ENCODE measurements at regions of chr15 and their contacts with region 1.

Region 1: GRCh38 chr15:40108855-40109735 is at the start of gene BMF:
- DNase-seq: peak; percentile 85
- H3K4me3 ChIP-seq: peak within 1 kb of the TSS; percentile 73
- H3K27me3 ChIP-seq: peaks cover 7% of the 10 kb centered on the region
- CTCF ChIP-seq: peak; percentile 45
- polyA plus RNA-seq, gene BMF: 5.8 and 8.3 TPM in 2 replicates

Region 2: GRCh38 chr15:40038638-40039543 is 70.2 kb before region 1 on chr15 and contains the start of gene SRP14:
- CTCF ChIA-PET with region 1: interaction called, 14 read pairs
- POLR2A ChIA-PET with region 1: no interaction called
- DNase-seq: peak; percentile 60
- H3K4me3 ChIP-seq: peak within 1 kb of the TSS; percentile 99
- H3K27me3 ChIP-seq: no peaks in the 10 kb centered on the region
- CTCF ChIP-seq: no peak
- polyA plus RNA-seq, gene SRP14: 305 and 564 TPM in 2 replicates

Region 3: DNA sequence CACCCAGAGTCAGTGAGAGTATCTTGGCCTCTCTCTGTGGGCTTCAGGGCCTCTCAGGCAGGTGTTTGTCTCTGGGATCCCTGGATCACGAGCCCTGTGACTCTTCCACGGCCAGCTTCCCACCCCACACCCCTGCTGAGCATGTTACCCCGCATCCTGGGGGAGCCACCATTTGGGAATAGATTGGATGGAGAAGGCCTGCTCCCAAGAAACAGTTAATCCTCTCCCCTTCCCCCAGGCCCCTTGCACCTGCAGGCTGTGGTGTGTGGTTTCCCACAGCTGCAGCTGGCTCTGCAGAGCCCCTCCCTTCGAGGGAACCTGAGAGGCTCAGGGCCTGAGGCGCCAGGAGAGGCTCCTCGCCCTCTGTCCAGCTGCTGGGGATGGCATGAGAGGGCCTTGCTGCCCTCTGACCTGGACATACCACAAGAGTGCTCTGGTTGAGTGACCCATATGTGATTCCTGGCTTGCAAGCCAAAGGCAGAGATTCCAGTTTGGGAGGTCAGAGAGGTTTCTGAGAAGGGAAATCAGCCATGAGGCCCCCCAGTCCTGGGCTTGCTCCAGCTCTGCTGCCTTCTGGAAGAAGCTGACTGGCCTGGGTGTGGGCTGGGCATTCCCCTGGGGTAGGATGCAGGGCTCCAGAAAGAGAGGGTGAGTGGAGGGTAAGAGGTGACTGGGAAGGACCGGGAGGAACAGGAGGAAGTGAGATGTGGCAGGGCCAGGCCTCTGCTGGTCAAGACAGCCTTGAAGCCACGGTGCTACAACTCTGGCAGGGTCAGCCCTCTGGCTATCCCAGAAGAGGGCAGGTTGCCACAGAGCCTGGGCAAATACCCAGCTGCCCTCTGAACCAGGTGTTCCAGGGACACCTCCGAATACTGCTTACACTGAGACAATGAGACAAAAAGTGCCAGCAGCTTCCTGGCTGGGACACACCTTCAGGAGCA is 54.2 kb before region 1 on chr15:
- CTCF ChIA-PET with region 1: interaction called, 93 read pairs
- POLR2A ChIA-PET with region 1: no interaction called
- DNase-seq: no peak
- H3K4me3 ChIP-seq: no peak overlapping the region
- H3K27me3 ChIP-seq: no peaks in the 10 kb centered on the region
- CTCF ChIP-seq: no peak

Region 4: GRCh38 chr15:40081691-40082194 is 27.4 kb before region 1 on chr15:
- CTCF ChIA-PET with region 1: interaction called, 10 read pairs
- POLR2A ChIA-PET with region 1: no interaction called
- DNase-seq: no peak
- H3K4me3 ChIP-seq: no peak overlapping the region
- H3K27me3 ChIP-seq: no peaks in the 10 kb centered on the region
- CTCF ChIP-seq: 0 out of 2 replicates have a peak, but pooled peaks have one; percentile 12

Region 5: GRCh38 chr15:40121911-40122638 is 13.0 kb after region 1 on chr15:
- CTCF ChIA-PET with region 1: interaction called, 12 read pairs
- POLR2A ChIA-PET with region 1: no interaction called
- DNase-seq: no peak
- H3K4me3 ChIP-seq: no peak overlapping the region
- H3K27me3 ChIP-seq: peaks cover 7% of the 10 kb centered on the region; the same call in 1 of the 2 replicates
- CTCF ChIP-seq: no peak

Region 6: GRCh38 chr15:40204100-40204499 is 95.0 kb after region 1 on chr15:
- CTCF ChIA-PET with region 1: interaction called, 13 read pairs
- POLR2A ChIA-PET with region 1: no interaction called
- DNase-seq: no peak
- H3K4me3 ChIP-seq: no peak overlapping the region
- H3K27me3 ChIP-seq: no peaks in the 10 kb centered on the region
- CTCF ChIP-seq: no peak